ENCODE measurements at regions of chr3 and their contacts with region 1.

Region 1: GRCh38 chr3:197599089-197599765 is 43.5 kb upstream of the BDH1 start:
- DNase-seq: peak; percentile 85
- ATAC-seq: peak; percentile 96
- H3K4me3 Mint-ChIP-seq: no peak overlapping the region
- H3K27ac Mint-ChIP-seq: no peak overlapping the region
- H3K4me1 Mint-ChIP-seq: peaks cover 18% of the 10 kb centered on the region
- H3K27me3 Mint-ChIP-seq: peaks cover 2% of the 10 kb centered on the region; the same call in 1 of the 2 replicates
- CTCF ChIP-seq: peak; percentile 77; the same call in 1 of the 2 replicates

Region 2: DNA sequence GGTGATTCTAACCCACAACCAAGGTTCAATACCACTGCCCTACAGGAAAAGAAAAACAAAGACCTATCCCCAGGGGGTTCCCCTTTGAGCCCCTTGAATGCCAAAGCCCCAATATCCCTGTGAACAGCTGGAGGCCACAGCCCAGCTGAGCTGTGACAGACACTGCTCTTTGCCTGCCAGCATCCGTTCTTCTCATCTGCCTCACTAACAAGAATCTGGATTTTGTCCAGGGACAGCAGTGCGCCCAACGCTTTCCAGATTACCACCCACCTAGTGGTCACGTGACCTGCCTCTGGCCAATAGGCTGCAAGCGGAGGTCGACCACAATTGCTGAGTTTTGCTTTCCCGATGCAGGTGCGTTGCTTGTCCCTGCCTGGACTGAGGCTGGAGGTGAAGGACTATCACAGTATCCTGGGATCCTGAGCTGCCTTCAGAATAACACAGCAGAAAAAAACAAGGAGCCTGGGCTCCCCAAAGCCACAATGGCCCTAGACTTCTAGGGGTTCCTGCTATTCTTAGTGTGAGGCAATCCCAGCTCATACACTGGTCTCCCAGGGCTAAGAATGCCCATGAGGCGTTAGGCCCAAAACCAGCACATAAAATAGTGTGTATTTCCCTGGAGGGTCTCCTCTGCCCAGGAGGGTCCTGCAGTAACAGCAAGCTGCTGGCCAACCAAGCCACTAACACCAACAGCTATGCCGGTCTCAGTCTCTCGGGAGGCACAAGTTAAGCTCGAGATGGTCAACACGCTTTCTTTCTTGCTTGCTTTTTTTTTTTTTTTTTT is 57.3 kb before region 1 on chr3:
- CTCF ChIA-PET with region 1: interaction called, 25 read pairs
- POLR2A ChIA-PET with region 1: interaction called, 4 read pairs
- DNase-seq: peak; percentile 83
- ATAC-seq: peak; percentile 46
- H3K4me3 Mint-ChIP-seq: peak overlapping the region; percentile 46
- H3K27ac Mint-ChIP-seq: peak overlapping the region; percentile 97
- H3K4me1 Mint-ChIP-seq: peaks cover 48% of the 10 kb centered on the region
- H3K27me3 Mint-ChIP-seq: no peaks in the 10 kb centered on the region; the same call in 1 of the 2 replicates
- CTCF ChIP-seq: no peak

Region 3: DNA sequence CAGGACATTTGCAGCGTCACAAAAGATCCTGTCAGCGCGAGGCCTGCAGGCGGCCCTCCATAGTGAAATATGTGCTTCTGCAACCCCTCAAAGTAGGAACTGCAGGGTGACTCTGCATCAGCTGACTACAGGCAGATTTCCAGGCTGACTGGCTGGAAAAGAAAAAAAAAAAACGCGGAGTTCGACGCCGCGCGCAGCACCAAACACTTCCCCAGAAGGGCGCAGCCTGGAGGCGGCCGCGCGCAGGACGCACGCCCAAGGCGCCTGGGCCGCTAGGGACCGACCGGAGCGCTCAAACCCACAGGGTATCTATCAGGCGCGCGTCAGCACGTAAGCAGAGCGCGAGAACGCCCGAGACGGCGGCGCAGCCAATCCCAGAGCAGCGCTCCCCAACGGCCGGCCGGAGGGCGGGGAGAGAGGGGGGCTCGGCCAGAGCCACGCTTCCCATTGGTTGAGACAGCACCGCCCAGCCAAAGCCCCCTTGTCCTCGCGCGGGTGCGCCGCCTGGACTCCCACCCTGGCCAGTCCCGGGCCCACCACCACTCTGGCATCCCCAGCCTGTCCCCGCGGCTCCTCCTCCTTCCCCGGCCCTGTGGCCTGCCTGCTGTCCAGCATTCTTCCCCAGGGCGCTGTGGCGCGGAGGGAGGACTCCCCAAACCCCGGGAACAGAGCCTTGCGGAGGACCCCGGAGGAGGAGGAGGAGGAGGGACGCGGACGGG is 44.5 kb before region 1 on chr3:
- CTCF ChIA-PET with region 1: interaction called, 44 read pairs
- POLR2A ChIA-PET with region 1: no interaction called
- DNase-seq: peak; percentile 97
- ATAC-seq: peak; percentile 93
- H3K4me3 Mint-ChIP-seq: peak overlapping the region; percentile 70
- H3K27ac Mint-ChIP-seq: peak overlapping the region; percentile 49
- H3K4me1 Mint-ChIP-seq: peaks cover 60% of the 10 kb centered on the region
- H3K27me3 Mint-ChIP-seq: peaks cover 32% of the 10 kb centered on the region
- CTCF ChIP-seq: no peak

Region 4: GRCh38 chr3:197573048-197573767 is 26.0 kb before region 1 on chr3:
- CTCF ChIA-PET with region 1: interaction called, 29 read pairs
- POLR2A ChIA-PET with region 1: interaction called, 3 read pairs
- DNase-seq: no peak
- ATAC-seq: no peak
- H3K4me3 Mint-ChIP-seq: 0 out of 2 replicates have a peak overlapping the region, but pooled peaks have one; percentile 14
- H3K27ac Mint-ChIP-seq: peak overlapping the region; percentile 98
- H3K4me1 Mint-ChIP-seq: peaks cover 69% of the 10 kb centered on the region
- H3K27me3 Mint-ChIP-seq: peaks cover 12% of the 10 kb centered on the region
- CTCF ChIP-seq: no peak

Region 5: DNA sequence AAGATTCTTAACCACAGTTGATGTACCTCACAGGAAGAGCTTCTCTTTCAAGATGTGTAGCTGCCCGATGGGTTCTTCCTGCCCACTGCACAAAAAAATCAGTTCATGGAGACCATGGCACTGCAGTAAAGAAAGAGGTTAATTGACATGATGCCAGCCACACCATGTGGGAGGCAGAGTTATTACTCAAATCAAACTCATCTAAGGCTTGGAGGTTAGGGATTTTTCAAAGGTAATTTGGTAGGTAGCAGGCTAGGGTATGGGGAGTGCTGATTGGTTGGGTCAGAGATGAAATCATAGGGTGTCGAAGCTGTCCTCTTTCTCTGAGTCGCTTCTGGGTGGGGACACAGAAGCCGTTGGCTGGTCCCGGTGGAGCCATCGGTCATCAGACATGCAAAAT is 14.0 kb after region 1 on chr3:
- CTCF ChIA-PET with region 1: interaction called, 16 read pairs
- POLR2A ChIA-PET with region 1: no interaction called
- DNase-seq: no peak
- ATAC-seq: no peak
- H3K4me3 Mint-ChIP-seq: no peak overlapping the region
- H3K27ac Mint-ChIP-seq: no peak overlapping the region
- H3K4me1 Mint-ChIP-seq: no peaks in the 10 kb centered on the region
- H3K27me3 Mint-ChIP-seq: no peaks in the 10 kb centered on the region
- CTCF ChIP-seq: no peak

Measured in WTC11 (cell line).